ENCODE measurements at regions of chr17 and their contacts with region 1.

Region 1: DNA sequence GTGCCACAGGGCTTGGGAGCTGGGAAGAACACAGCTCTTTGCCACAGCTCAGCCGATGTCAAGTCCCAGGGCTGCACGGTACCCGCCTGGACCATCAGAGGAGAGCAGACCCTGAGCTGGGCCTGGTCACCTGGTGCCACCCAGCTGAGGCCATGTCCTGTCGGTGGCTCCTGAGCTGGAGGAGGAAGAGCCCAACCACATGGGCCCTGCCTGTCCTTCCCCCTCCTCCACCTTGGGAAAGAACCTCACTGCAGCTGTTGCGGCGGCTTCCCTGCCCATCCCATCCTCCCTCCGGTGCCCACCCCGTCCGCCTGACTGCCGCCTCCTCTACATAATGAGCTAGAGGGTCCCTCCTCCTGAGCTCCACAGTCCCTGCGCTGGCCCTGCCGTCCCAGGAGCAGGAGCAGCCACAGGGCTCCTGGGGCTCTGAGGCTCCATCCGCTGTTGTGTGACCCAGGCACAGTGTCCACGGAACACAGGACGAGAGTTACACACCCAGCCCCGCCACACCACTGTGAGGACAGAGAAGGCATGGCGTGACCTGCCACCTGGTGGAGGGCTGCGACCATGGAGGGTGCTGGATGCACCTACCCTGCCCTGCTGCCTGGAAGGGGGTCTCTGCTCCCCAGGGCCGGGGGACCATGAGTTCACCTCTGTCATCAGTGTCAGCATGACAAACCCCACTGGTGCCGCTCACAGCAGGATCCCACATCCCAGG is 21.4 kb upstream of the CHMP6 start:
- DNase-seq: peak in 4 of 5 donors; percentile 47 to 70 (median 60)
- H3K4me3 ChIP-seq: no peak overlapping the region
- H3K27ac ChIP-seq: no peak overlapping the region
- H3K4me1 ChIP-seq: peaks cover 19% of the 10 kb centered on the region
- H3K27me3 ChIP-seq: no peaks in the 10 kb centered on the region
- CTCF ChIP-seq: peak; percentile 17 to 61 (median 41)
- EP300 ChIP-seq: no peak
- POLR2A ChIP-seq: no peak

Region 2: DNA sequence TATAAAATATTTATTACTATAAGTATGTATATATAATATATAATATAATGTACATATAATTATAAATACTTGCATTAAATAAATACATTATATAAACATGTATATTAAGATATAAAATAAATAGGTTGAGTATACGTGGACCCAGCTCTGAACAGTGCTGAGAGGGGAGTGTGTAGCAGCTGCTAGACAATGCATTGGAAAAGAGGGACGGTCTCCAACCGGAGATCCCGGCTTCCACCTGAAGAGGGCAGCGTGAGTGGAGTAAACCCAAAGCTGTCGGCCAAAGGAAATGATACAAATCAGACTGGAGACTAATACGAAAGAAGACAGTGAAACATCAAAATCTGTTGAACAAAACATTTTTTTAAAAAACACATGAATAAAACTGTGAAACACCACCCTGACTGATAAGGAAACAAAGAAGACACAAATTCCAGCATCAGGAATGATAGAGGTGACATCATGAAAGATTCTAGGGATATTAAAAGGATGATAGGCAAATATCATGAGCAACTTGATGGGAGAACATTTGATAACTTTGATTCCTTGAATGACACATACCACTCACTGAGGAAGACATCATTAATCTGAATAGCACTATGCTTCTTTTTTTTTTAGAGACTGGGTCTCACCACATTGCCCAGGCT is 103.9 kb before region 1 on chr17:
- intact Hi-C with region 1: loop called in 2 of 4 experiments (anchors 5 to 10 kb)
- DNase-seq: peak; percentile 49 to 80 (median 71)
- H3K4me3 ChIP-seq: no peak overlapping the region
- H3K27ac ChIP-seq: no peak overlapping the region
- H3K4me1 ChIP-seq: peaks cover under 1% of the 10 kb centered on the region
- H3K27me3 ChIP-seq: no peaks in the 10 kb centered on the region
- CTCF ChIP-seq: peak in 1 of 3 donors; percentile 49
- EP300 ChIP-seq: no peak
- POLR2A ChIP-seq: no peak

Region 3: GRCh38 chr17:80876950-80877728 is 93.1 kb before region 1 on chr17:
- intact Hi-C with region 1: loop called in 1 of 4 experiments (anchors 5 kb)
- DNase-seq: peak in 1 of 5 donors; percentile 17
- H3K4me3 ChIP-seq: no peak overlapping the region
- H3K27ac ChIP-seq: no peak overlapping the region
- H3K4me1 ChIP-seq: no peaks in the 10 kb centered on the region
- H3K27me3 ChIP-seq: no peaks in the 10 kb centered on the region
- CTCF ChIP-seq: no peak
- EP300 ChIP-seq: no peak
- POLR2A ChIP-seq: no peak

Measured in ovary (tissue), 10 donors.